Mammary epithelial cell (primary cell): ENCODE measurements at regions of chr22 and their contacts with region 1.

Region 1: DNA sequence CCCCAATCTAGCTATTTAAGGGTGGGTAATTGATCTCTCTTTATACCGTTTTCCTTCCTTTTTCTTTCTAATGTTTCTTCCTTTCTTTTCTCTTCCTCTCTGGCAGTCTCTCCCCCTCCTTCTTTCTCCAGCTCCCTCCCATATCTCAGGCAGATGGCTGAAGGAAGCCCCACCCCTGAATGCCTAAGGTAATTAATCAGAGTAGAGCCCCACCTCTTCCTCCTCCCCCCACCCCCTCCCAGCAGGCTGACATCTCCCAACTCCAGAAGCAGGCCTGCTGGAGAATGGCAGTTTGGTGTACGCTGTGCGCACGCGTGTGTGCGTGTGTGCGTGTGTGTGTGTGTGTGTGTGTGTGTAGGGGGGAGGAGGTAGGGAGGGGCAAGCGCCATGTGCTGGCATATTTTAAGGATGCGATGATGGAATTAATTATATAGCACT is 122.6 kb downstream of the APOL5 start:
- DNase-seq: peak; percentile 98
- H3K4me3 ChIP-seq: peak overlapping the region; percentile 65 to 83 (median 83)
- H3K27ac ChIP-seq: peak overlapping the region; percentile 82
- H3K4me1 ChIP-seq: peaks cover 22% of the 10 kb centered on the region
- H3K27me3 ChIP-seq: no peaks in the 10 kb centered on the region
- CTCF ChIP-seq: no peak

Region 2: DNA sequence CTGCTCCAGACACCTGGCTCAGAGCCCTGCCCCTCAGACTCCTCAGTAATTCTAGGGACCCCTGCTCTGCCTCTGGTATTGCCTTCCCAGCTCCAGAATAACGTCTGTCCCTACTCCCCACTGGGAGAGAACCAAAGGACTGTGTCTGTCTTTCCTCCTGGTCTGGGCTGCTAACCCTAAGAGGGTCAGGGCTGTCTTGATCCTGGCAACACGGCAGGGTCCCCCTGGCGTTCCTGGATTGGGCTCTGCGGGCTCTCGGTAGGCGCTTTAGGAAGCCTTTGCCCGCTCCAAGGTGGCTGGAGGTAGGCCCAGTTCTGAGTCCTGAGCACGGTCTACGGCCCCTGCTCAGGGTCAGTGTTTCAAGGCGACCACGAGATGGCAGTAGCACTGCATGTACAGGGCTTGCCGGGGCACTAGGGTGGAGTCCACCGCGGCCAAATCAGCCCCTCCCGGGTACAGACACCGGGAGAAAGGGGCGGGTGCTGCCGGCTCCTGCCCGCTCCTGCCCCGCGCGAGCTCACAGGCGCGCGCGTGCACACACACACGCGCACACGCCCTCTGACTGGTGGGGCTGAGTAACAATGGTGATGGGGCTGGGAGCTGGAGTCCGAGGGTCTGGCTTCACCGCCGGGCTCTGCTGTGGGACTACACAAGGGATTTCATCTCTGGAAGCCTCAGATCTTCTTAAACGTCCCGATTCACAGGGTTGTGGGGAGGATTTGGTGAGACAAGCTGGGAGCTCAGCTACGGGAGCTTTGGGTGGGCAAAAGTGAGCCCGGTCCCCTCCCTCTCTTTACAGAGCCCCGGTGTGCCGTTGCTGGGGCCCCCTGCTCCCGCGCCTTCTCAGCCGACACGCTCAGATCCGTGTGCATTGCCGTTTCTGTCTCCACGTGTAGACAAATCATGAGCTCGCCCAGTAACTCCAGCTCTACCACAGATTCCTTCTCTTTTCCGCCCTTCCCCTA is 489.5 kb before region 1 on chr22:
- CTCF ChIA-PET with region 1: no interaction called
- dilution Hi-C with region 1: no loop called
- in situ Hi-C with region 1: no loop called
- intact Hi-C with region 1: loop called (anchors 5 kb)
- DNase-seq: peak; percentile 84
- H3K4me3 ChIP-seq: peak overlapping the region; percentile 50 to 52 (median 51)
- H3K27ac ChIP-seq: peak overlapping the region; percentile 47
- H3K4me1 ChIP-seq: peaks cover 8% of the 10 kb centered on the region
- H3K27me3 ChIP-seq: no peaks in the 10 kb centered on the region
- CTCF ChIP-seq: peak; percentile 71 to 82

Region 3: DNA sequence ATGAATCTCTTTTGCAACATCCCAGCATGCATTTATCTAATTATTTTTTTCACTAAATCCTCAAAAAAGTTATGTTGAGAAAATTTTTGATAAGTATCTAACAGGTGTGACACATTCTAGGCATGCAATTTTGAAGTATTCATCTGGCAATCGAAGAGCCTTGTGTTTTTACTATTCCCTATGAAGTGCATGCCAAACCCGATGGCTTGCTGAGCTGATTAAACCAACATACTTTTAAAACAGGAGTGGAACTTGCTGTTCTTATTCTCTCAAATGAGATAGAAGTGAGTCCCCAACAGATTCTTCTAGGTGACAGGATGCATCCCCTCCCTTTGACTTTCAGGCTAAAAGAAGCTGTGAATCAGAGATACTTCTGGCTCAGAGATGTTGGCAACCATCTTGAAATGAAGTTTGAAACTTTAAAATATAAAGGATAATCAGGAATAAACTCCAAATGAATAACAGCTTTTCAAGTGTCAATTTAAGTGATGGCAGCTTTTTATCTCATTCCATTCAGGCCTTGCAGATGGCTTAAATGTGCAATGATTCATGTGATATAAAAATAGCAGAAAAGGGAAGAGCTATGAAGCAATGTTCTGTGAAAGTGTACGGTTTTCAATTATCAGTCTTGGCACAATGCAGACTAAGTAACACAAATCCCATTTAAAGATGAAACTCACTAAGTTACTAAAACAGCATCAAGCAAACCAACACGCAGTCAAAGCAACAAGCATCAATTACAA is 55.0 kb before region 1 on chr22:
- CTCF ChIA-PET with region 1: no interaction called
- dilution Hi-C with region 1: loop called (anchors 5 kb)
- in situ Hi-C with region 1: no loop called
- intact Hi-C with region 1: loop called (anchors 2 kb)
- DNase-seq: peak; percentile 10
- H3K4me3 ChIP-seq: no peak overlapping the region
- H3K27ac ChIP-seq: no peak overlapping the region
- H3K4me1 ChIP-seq: peaks cover 27% of the 10 kb centered on the region
- H3K27me3 ChIP-seq: no peaks in the 10 kb centered on the region
- CTCF ChIP-seq: no peak

Region 4: DNA sequence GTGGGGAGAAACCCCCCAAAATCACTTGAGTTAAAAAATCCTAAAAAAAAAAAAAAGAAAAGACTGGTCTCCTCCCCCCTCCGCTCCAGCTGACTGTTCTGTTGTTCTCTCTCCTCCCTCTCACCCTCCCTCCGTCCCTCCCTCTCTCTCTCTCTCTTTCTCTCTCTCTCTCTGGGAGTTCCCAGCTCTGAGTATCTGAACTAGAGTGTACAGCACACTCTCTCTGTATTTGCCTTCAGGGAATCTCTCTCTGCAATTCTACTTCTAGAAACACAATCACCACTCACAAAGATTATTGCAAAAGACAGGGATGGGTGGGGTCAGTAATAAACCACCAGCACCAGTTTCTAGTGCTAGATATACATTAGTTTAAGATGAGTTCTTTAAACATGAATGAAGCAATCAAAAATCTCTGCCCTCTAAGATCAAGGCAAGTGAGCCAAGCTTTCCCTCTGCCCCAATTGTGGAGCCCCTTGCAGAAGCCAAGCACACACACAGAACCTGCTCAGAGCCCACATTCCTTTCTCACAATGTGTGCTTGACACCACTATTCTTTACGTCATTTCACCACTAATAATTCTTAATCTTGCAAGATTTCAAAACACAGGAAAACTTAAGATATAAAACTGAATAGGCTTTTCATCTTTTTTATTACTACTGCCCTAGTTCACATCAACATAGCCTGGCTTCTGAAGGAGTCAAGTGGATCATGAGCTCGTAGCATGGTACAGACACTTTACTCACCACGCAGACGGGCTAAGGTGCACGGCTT is 54.8 kb after region 1 on chr22:
- CTCF ChIA-PET with region 1: no interaction called
- dilution Hi-C with region 1: no loop called
- in situ Hi-C with region 1: no loop called
- intact Hi-C with region 1: loop called (anchors 1 kb)
- DNase-seq: peak; percentile 99
- H3K4me3 ChIP-seq: peak overlapping the region; percentile 49 to 59 (median 54)
- H3K27ac ChIP-seq: peak overlapping the region; percentile 96
- H3K4me1 ChIP-seq: peaks cover 61% of the 10 kb centered on the region
- H3K27me3 ChIP-seq: no peaks in the 10 kb centered on the region
- CTCF ChIP-seq: no peak

Region 5: DNA sequence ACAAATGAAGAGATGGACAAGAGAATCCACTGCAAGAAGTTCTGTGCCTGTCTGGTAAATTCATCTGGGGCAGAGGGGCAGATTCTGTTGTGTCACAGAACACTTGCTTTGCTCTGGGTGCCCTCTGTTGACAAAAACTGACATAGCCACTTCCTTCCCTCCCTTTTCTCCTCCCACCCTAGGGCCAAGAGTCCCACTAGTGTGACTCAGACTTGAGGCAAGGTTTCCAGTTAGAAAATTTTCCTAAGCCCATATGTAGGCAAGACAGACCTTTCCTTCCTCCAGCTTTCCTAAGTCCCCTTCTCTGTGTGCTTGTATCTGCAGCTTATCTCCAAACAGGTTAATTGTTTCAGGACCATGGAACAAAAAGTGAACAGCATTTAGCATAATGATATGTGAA is 81.5 kb after region 1 on chr22:
- CTCF ChIA-PET with region 1: no interaction called
- dilution Hi-C with region 1: no loop called
- in situ Hi-C with region 1: no loop called
- intact Hi-C with region 1: loop called (anchors 1 kb)
- DNase-seq: peak; percentile 87
- H3K4me3 ChIP-seq: no peak overlapping the region
- H3K27ac ChIP-seq: peak overlapping the region; percentile 27
- H3K4me1 ChIP-seq: peaks cover 32% of the 10 kb centered on the region
- H3K27me3 ChIP-seq: no peaks in the 10 kb centered on the region
- CTCF ChIP-seq: peak; percentile 46 to 74

Region 6: GRCh38 chr22:36065775-36066559 is 225.6 kb after region 1 on chr22:
- CTCF ChIA-PET with region 1: interaction called, 5 read pairs
- dilution Hi-C with region 1: no loop called
- in situ Hi-C with region 1: no loop called
- intact Hi-C with region 1: loop called (anchors 1 kb)
- DNase-seq: peak; percentile 85
- H3K4me3 ChIP-seq: peak overlapping the region; percentile 46 to 55 (median 49)
- H3K27ac ChIP-seq: peak overlapping the region; percentile 58
- H3K4me1 ChIP-seq: peaks cover 13% of the 10 kb centered on the region
- H3K27me3 ChIP-seq: no peaks in the 10 kb centered on the region
- CTCF ChIP-seq: peak in 1 of 2 donors; percentile 93